Heart left ventricle (tissue), 16 donors: ENCODE measurements at regions of chr6 and their contacts with region 1.

Region 1: GRCh38 chr6:163579880-163580295 is 165.4 kb downstream of the QKI start:
- DNase-seq: peak in 1 of 5 donors; percentile 29
- ATAC-seq: peak in 3 of 4 donors; percentile 19 to 44 (median 42)
- H3K4me3 ChIP-seq: no peak overlapping the region
- H3K27ac ChIP-seq: peak overlapping the region in 6 of 12 donors; percentile 3 to 60 (median 32)
- H3K4me1 ChIP-seq: peaks cover 0 to 38% (median 16%) of the 10 kb centered on the region in 12 donors
- H3K27me3 ChIP-seq: no peaks in the 10 kb centered on the region
- CTCF ChIP-seq: peak in 5 of 12 donors; percentile 17 to 32 (median 24)
- POLR2A ChIP-seq: no peak

Region 2: DNA sequence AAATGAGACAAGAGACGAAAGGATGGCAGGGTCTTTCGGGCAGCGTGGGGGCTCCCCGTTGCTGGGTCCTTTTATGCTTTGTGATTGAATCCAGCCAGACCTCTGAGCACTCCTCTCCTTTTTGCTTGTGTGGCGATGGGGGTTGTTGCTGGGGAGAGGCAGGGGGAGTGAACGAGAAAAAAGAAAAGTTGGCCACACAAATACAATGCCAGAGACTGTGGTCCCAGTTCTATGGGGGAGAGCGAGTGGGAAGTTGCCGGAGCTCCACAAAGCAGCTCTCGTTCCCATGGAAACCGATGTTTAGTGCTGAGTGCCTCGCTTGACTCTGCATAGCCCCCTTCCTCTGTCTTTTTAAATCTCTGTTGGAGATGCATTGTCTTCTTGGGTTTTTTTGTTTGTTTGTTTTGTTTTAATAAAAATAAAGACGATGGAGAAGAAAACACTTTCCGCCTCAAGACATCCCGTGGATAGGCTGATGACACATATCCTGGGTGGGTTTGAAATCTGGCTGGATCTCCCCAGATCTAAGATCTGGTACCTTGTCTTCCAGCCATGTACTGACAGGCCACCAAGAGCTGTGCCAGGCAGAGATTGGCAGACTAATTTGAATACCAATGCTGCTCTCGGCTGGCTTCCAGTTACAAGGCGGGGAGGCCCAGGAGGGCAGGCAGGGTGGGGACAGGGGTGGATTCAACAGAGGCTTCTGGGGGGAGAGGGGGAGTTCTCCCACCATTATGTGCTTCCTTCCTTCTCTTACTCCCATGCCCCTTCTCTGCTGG is 363.9 kb after region 1 on chr6:
- intact Hi-C with region 1: loop called in 2 of 10 experiments (anchors 5 kb)
- DNase-seq: peak in 4 of 5 donors; percentile 55 to 72 (median 65)
- ATAC-seq: peak; percentile 71 to 80 (median 74)
- H3K4me3 ChIP-seq: peak overlapping the region in 1 of 12 donors; percentile 32
- H3K27ac ChIP-seq: peak overlapping the region in 10 of 12 donors; percentile 12 to 71 (median 42)
- H3K4me1 ChIP-seq: peaks cover 8 to 39% (median 27%) of the 10 kb centered on the region in 12 donors
- H3K27me3 ChIP-seq: no peaks in the 10 kb centered on the region
- CTCF ChIP-seq: no peak
- POLR2A ChIP-seq: no peak

Region 3: DNA sequence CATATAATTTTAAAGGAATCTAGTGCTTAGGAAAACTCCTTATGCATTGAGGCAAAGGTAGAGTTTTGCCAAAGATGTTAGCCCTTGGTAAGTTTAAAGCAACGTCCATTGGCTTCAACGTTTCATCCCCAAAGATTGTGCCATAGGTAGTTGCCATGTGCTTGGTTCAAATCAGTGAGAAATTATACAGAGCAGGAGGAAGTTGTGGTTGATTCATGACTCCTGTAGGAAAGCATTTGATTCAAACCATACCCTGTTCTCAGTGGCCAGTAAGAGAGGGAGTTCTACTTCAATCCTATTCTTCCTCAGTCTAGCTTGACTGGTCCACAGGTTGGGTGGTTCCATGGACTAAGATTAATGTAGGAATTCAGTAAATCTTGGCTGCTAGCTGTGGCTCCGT is 370.3 kb after region 1 on chr6:
- intact Hi-C with region 1: loop called in 9 of 10 experiments (anchors 5 to 10 kb)
- DNase-seq: no peak
- ATAC-seq: no peak
- H3K4me3 ChIP-seq: no peak overlapping the region
- H3K27ac ChIP-seq: no peak overlapping the region
- H3K4me1 ChIP-seq: peaks cover 0 to 8% (median under 1%) of the 10 kb centered on the region in 12 donors
- H3K27me3 ChIP-seq: no peaks in the 10 kb centered on the region
- CTCF ChIP-seq: no peak
- POLR2A ChIP-seq: no peak

Region 4: DNA sequence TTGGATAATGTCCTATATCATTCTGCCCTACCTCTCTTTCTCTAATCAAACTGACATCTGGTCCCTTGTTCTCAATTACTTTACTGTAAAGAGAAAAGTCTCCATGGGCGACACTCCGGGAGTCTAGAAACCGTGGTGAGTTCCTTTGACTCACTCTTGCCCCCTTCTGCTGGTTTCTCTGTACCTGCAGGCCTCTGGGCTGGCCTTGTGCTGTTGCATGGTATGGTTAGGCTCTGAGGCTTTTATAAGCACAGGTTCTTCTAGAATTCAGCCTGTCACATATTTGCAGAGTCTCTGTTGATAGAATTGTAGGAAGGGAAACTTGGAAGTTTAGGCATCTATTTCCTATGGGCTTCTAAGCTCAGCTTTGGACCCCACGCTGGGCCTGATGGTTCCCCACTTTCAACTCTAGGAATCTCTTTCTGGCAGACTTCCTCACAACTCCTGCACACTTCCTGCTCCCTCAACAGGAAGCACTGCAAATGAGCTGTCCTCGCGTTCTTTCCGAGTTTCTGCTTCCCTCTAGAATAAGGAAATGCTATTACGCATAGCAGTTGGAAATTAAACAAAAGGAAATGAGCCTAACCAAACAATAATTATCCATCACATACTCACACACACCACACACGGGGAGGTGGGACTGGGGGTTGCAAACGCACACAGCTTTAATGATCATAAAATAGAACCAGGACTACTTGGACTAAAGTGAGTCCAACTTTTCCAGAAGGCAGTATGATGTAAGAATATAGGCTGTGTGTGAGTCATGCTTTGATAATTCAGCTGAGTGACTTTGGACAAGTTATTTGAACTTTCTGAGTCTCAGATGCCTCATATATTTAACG is 517.9 kb after region 1 on chr6:
- intact Hi-C with region 1: loop called in 5 of 10 experiments (anchors 5 to 10 kb)
- DNase-seq: peak in 3 of 5 donors; percentile 54 to 68 (median 59)
- ATAC-seq: peak; percentile 39 to 78 (median 52)
- H3K4me3 ChIP-seq: no peak overlapping the region
- H3K27ac ChIP-seq: peak overlapping the region; percentile 18 to 91 (median 84)
- H3K4me1 ChIP-seq: peaks cover 3 to 45% (median 30%) of the 10 kb centered on the region in 12 donors
- H3K27me3 ChIP-seq: no peaks in the 10 kb centered on the region
- CTCF ChIP-seq: peak; percentile 20 to 63 (median 46)
- POLR2A ChIP-seq: no peak